Activated naive CD4-positive, alpha-beta T cell treated with anti-CD3 and anti-CD28 coated beads, Interleukin-2, amount 10 ng/mL, durations not matched to agents 7 days and 5 days (primary cell): ENCODE measurements at regions of chr1 and their contacts with region 1.

Region 1: GRCh38 chr1:38071312-38072256 is 25.0 kb upstream of the POU3F1 start:
- DNase-seq: no peak
- H3K4me3 Mint-ChIP-seq: no peak overlapping the region
- H3K27ac Mint-ChIP-seq: no peak overlapping the region
- H3K4me1 Mint-ChIP-seq: no peaks in the 10 kb centered on the region
- H3K27me3 Mint-ChIP-seq: peaks cover 62% of the 10 kb centered on the region

Region 2: DNA sequence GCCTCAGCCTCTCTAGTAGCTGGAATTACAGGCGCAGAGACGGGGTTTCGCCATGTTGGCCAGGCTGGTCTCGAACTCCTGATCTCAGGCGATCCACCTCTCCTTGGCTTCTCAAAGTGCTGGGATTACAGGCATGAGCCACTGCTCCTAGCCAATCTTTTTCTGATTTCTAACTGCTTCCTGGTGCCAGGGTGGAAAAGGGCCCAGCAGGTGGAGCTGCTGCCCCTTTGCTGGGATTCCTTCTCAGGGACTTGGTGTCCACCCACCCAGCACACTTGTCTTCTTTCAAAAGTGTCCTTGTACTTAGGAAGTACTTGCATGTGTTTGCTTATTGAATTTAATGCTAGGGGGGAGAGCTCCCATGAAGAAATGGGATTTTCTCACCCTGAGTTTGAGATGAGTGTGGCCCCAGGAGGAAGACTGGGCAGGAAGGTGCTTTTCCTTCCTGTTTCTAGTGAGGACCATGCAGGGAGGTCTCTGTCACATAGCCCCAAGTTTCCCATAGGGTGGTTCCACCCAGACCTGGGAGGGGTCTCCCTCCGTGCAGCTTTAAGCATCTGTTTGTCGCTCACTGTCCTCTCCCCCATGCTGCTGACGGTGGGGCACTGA is 44.9 kb before region 1 on chr1:
- CTCF ChIA-PET with region 1: interaction called, 25 read pairs
- DNase-seq: peak; percentile 56
- H3K4me3 Mint-ChIP-seq: no peak overlapping the region
- H3K27ac Mint-ChIP-seq: no peak overlapping the region
- H3K4me1 Mint-ChIP-seq: peaks cover 51% of the 10 kb centered on the region
- H3K27me3 Mint-ChIP-seq: no peaks in the 10 kb centered on the region